ENCODE measurements at regions of chr12 and their contacts with region 1.

Region 1: DNA sequence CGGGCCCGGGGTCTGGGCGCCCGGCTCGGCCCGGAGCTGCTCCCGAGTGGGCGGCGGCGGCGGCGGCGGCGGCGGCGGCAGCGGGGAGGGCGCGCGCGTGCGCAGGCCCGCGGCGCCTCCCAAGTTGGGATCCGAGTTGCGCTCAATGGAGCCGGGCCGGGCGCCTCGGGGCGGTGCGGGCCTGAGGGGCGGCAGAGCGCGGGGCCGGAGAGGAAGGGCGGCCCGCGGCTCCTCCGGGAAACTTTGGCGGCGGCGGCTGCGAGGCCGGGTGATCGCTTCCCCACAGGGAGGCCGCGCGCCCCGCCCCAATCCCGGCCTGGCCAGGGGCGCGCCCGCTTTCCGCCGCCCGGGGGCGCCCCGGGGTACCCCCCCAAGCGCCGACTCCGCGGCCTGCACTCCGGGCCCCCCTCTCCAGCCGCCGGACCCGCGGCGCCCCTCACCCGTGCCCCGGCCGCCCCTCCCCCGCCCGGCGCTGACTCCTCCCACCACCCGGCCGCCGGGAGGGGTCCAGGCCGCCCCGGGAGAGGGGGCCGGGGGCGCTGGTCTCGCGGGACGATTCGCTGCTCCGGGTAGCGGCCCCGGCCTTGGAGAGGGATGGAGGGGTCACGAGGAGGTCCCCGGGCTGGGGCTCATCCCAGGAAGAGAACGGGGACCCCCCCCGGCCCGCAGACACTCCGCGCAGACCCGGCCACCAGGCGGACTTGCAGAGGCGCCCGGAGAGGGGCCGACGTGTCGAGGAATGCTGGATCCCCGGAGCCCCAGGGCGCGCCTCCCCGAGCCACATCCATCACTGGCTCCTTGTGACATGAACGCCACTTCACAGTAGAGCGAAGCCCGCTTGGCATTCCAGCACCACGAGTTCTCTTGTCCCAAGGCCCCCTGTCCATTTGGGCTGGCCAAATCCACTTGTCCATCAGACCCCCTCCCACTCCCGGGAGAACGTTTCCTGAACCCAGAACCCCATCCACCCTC is at the start of gene RILPL1:
- DNase-seq: peak; percentile 45 to 57
- H3K4me3 ChIP-seq: peak within 1 kb of the TSS; percentile 87
- H3K27ac ChIP-seq: no peak within 1 kb of the TSS
- H3K4me1 ChIP-seq: peaks cover 11% of the 10 kb centered on the region; the same call in 1 of the 2 replicates
- H3K27me3 ChIP-seq: no peaks in the 10 kb centered on the region
- CTCF ChIP-seq: no peak
- total RNA-seq, gene RILPL1: 11.5 and 15.3 TPM in 2 replicates

Region 2: DNA sequence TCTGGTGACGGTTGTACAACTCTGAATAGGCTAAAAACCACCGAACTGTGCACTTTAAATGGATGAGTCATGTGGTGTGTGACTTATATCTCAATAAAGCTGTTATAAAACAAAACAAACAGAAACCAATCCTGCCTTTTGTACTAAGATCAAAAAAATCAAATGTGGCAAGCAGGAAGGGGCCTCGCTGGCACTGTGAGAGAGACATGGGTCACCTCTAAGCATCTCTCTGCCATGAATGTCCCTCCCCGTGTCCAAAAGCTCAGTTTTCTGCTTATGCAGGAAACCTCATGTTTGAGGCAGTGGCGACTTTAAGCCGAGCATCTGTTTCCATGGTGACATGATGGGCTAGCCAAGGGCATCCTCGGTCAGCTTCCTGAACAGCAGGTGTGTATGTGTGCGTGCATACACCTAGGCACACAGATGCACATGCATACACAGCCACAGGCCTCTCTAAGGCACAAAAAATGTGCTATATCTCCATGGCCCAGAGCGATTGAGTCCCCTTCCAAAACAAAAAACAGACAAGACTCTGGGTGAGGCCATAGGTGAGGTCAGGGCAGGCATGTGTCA is 509.1 kb before region 1 on chr12:
- CTCF ChIA-PET with region 1: interaction called, 14 read pairs
- POLR2A ChIA-PET with region 1: no interaction called
- intact Hi-C with region 1: no loop called
- DNase-seq: no peak
- H3K4me3 ChIP-seq: no peak overlapping the region
- H3K27ac ChIP-seq: no peak overlapping the region
- H3K4me1 ChIP-seq: peaks cover under 1% of the 10 kb centered on the region; the same call in 1 of the 2 replicates
- H3K27me3 ChIP-seq: no peaks in the 10 kb centered on the region
- CTCF ChIP-seq: no peak

Region 3: GRCh38 chr12:123388177-123388947 is 145.6 kb before region 1 on chr12:
- CTCF ChIA-PET with region 1: no interaction called
- POLR2A ChIA-PET with region 1: interaction called, 5 read pairs
- intact Hi-C with region 1: loop called (anchors 10 kb)
- DNase-seq: peak; percentile 49 to 74
- H3K4me3 ChIP-seq: peak overlapping the region; percentile 80
- H3K27ac ChIP-seq: 0 out of 2 replicates have a peak overlapping the region, but pooled peaks have one; percentile 35
- H3K4me1 ChIP-seq: peaks cover 30% of the 10 kb centered on the region
- H3K27me3 ChIP-seq: no peaks in the 10 kb centered on the region
- CTCF ChIP-seq: no peak

Region 4: DNA sequence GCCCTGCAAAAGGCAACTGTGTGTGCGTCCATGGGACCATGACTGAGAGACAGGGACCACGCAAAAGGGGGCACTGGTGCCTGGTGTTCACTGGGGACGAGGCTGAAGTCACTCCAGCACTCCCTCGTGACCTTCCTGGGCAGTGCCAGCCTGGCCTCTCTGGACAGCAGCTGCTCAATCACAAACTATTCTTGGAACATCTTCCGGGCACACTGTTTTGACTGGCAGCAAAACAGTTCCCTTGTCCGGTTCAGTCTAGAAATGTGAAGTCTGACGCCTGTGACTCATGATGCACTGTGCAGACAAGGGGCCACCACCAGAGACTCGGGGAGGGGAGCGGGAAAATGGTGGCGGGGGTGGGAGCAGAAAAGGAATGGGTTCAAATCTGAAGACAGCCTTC is 55.2 kb before region 1 on chr12:
- CTCF ChIA-PET with region 1: no interaction called
- POLR2A ChIA-PET with region 1: no interaction called
- intact Hi-C with region 1: loop called (anchors 10 kb)
- DNase-seq: no peak
- H3K4me3 ChIP-seq: no peak overlapping the region
- H3K27ac ChIP-seq: no peak overlapping the region
- H3K4me1 ChIP-seq: no peaks in the 10 kb centered on the region
- H3K27me3 ChIP-seq: no peaks in the 10 kb centered on the region
- CTCF ChIP-seq: no peak

Measured in PC-9 (cell line).